A549 (cell line): ENCODE measurements at regions of chr15 and their contacts with region 1.

Region 1: DNA sequence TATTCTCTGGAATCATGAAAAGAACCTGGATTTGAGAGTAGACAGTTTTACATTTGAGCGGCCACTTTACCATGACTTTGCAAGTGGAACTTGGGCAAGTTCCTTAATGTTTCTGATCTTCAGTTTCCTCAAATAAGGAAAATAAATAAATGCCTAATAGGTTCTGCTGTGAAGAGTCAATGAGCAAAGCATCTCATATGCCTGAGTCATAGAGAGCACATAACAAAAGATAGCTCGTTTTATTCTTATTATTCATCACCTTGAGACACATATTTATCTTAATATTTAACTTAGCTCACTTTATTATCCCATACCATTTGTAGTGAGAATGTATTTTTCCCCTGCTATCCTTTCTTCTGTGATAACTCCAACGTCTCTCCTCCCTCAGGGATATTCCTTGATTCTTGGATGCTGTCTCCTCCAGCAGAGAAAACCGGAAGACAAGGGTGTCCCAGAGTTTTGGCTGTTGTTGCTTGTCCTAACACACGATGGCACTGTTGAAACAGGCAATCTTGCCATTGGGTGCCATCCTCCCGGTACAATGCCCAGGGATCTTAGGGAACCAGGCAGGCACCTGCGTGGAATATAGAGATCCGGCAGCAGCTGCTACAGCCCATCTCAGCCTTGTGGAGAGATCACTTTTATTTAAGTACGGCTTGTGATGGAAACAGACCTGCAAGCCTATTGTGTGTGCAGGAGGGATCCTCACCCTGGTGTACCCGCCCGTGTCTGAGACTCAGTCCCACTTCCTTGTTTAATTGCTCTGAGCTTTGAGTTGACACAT is 33.3 kb upstream of the VPS33B start:
- DNase-seq: peak; percentile 85 to 95
- ATAC-seq: peak; percentile 94 to 96
- H3K4me3 ChIP-seq: peak overlapping the region; percentile 9
- H3K27ac ChIP-seq: no peak overlapping the region
- H3K4me1 ChIP-seq: no peaks in the 10 kb centered on the region
- CTCF ChIP-seq: peak; percentile 96
- EP300 ChIP-seq: no peak
- POLR2A ChIP-seq: no peak
- RAD21 ChIP-seq: peak; percentile 92 to 96

Region 2: GRCh38 chr15:91068966-91069365 is 13.2 kb after region 1 on chr15:
- CTCF ChIA-PET with region 1: interaction called, 49 read pairs
- POLR2A ChIA-PET with region 1: no interaction called
- DNase-seq: no peak
- ATAC-seq: no peak
- H3K4me3 ChIP-seq: no peak overlapping the region
- H3K27ac ChIP-seq: no peak overlapping the region
- H3K4me1 ChIP-seq: no peaks in the 10 kb centered on the region
- CTCF ChIP-seq: no peak
- EP300 ChIP-seq: no peak
- POLR2A ChIP-seq: no peak
- RAD21 ChIP-seq: no peak

Region 3: GRCh38 chr15:91224755-91225380 is 169.1 kb after region 1 on chr15:
- CTCF ChIA-PET with region 1: interaction called, 59 read pairs
- POLR2A ChIA-PET with region 1: no interaction called
- DNase-seq: peak; percentile 66 to 80
- ATAC-seq: peak; percentile 76 to 91
- H3K4me3 ChIP-seq: no peak overlapping the region
- H3K27ac ChIP-seq: no peak overlapping the region
- H3K4me1 ChIP-seq: no peaks in the 10 kb centered on the region
- CTCF ChIP-seq: peak; percentile 76
- EP300 ChIP-seq: no peak
- POLR2A ChIP-seq: no peak
- RAD21 ChIP-seq: peak; percentile 62 to 80; a peak in 4 of 5 replicates

Region 4: GRCh38 chr15:91258425-91258779 is 202.7 kb after region 1 on chr15:
- CTCF ChIA-PET with region 1: interaction called, 13 read pairs
- POLR2A ChIA-PET with region 1: no interaction called
- DNase-seq: peak; percentile 16 to 28
- ATAC-seq: peak; percentile 68 to 79; a peak in 5 of 6 replicates
- H3K4me3 ChIP-seq: no peak overlapping the region
- H3K27ac ChIP-seq: no peak overlapping the region
- H3K4me1 ChIP-seq: no peaks in the 10 kb centered on the region
- CTCF ChIP-seq: no peak
- EP300 ChIP-seq: no peak
- POLR2A ChIP-seq: no peak
- RAD21 ChIP-seq: no peak

Region 5: GRCh38 chr15:91278791-91279404 is 223.2 kb after region 1 on chr15:
- CTCF ChIA-PET with region 1: interaction called, 156 read pairs
- POLR2A ChIA-PET with region 1: no interaction called
- DNase-seq: no peak
- ATAC-seq: no peak
- H3K4me3 ChIP-seq: no peak overlapping the region
- H3K27ac ChIP-seq: no peak overlapping the region
- H3K4me1 ChIP-seq: no peaks in the 10 kb centered on the region
- CTCF ChIP-seq: no peak
- EP300 ChIP-seq: no peak
- POLR2A ChIP-seq: no peak
- RAD21 ChIP-seq: no peak